ENCODE measurements at regions of chr1 and their contacts with region 1.

Region 1: DNA sequence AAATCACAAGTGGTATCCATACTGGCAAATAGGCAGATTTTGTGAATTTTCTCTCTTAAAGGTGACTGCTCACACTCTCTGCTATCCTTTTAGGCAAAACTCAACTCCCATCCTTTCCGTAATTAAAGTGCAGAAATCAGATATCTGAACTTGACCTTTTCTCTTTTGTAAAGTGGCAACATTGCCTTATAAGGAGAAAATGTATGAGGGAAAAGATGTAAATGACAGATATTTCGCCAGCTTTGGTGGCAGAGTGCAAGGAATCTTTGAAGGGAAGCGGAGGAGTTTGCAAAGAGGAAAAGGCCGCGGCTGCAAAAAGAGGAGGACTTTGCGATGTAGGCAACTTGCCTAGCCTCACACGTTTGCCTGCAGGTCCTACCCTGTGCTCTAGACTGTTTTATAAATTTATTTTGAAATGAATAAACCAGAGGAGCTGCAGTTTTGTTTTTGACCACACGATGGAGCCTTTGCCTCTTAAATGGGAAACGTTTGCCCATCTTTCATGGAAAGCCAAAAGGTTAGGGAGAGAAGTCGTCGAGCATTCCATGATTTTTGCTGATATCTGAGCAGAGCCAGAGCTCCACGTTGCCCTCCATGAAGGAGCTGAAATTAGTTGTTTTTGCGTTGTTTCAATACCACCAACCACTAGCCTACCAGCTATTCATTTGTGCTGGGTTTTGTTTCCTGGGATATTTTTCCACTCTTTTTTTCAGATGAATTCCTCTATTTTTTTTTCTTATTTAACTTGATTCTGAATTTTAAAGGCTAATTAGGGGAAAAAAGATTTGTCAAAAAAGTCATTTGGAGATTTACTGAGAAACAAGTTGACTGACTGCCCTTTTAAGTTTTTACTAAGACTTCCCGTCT is 242.3 kb downstream of the LMX1A start:
- DNase-seq: no peak
- H3K4me3 ChIP-seq: no peak overlapping the region
- CTCF ChIP-seq: peak; percentile 58

Region 2: DNA sequence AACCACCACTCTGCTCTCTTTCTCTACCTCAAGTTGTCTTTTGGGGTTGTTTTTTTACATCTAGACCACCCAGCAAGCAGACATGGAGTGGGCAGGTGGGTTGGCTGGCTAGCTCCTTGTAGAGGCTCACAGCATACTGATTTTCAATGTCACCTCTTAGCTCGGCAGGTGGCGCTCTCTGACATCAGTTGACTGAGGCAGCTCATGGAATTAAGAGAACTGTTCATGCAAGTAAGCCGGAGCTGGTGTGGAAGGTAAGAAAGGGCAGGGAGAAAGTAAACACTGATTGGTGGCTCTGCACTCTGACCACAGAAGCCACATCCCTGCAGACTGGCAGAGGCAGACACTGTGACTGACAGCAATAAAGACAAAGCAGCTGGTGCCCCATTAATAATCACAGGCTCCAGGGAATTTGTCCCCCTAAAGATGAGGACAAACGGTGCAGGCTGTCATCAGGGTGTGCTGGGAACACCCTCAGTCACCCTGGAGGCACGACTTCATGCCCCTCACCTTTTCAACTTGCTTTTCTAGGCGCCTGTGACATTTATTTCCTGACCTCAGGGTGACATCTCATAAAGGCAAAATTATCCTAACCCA is 15.4 kb after region 1 on chr1:
- CTCF ChIA-PET with region 1: interaction called, 13 read pairs
- POLR2A ChIA-PET with region 1: no interaction called
- DNase-seq: no peak
- H3K4me3 ChIP-seq: no peak overlapping the region
- CTCF ChIP-seq: peak; percentile 51

Measured in AG04449 (cell line).